Psoas muscle (tissue), 8 donors: ENCODE measurements at regions of chr13 and their contacts with region 1.

Region 1: GRCh38 chr13:109156181-109156935 is 526.9 kb downstream of the MYO16 start:
- DNase-seq: no peak
- ATAC-seq: peak; percentile 33 to 66 (median 48)
- H3K4me3 ChIP-seq: no peak overlapping the region
- H3K27ac ChIP-seq: no peak overlapping the region
- H3K4me1 ChIP-seq: peaks cover 10% of the 10 kb centered on the region
- H3K27me3 ChIP-seq: peaks cover 0 to 2% (median 0%) of the 10 kb centered on the region in 3 donors
- CTCF ChIP-seq: no peak

Region 2: DNA sequence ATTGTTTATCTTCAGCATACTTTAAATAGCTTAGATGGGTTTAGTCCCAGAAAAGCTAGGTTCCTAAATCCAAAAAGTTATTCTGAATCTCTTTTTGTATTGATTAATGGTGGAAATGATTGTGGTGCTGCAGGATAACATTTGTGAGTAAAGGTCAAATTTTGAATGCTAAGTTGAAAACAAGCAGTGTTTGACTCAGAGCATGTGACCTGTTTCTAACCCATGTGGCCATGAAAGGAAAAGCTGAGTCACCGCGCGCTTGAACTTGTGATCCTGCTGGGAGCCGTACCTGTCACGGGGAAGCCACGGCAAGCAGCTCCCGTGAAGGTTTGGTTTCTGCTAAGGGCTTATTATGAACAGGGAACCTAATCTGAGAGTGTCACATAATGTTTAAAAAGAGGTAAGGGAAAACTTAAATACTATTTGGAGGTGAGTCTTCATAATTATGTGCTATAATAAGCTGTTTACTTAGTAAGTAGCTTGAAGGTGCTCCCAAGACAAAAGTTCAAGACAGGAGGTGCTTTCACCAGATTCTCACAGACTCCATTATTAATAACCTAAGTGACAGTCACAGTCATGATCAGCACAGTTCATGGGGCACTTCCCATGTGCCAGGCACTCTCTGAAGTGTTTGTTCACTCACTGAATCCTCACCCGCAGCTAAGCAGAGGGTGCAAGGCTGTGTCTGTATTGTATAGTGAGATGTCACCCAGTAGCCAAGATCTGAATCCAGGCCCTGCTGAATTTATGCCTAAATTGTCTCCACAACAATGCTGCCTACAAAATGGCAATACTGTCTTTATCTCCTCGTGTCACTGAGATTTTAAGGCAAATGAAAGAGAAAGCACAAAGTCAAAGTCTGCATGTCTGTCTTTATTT is 240.5 kb before region 1 on chr13:
- intact Hi-C with region 1: no loop called
- DNase-seq: peak; percentile 75 to 80
- ATAC-seq: peak in 3 of 4 donors; percentile 45 to 74 (median 49)
- H3K4me3 ChIP-seq: peak overlapping the region; percentile 13
- H3K27ac ChIP-seq: peak overlapping the region; percentile 39
- H3K4me1 ChIP-seq: no peaks in the 10 kb centered on the region
- H3K27me3 ChIP-seq: no peaks in the 10 kb centered on the region
- CTCF ChIP-seq: no peak

Region 3: GRCh38 chr13:109026266-109026665 is 130.1 kb before region 1 on chr13:
- intact Hi-C with region 1: no loop called
- DNase-seq: no peak
- ATAC-seq: no peak
- H3K4me3 ChIP-seq: no peak overlapping the region
- H3K27ac ChIP-seq: no peak overlapping the region
- H3K4me1 ChIP-seq: no peaks in the 10 kb centered on the region
- H3K27me3 ChIP-seq: no peaks in the 10 kb centered on the region
- CTCF ChIP-seq: no peak

Region 4: DNA sequence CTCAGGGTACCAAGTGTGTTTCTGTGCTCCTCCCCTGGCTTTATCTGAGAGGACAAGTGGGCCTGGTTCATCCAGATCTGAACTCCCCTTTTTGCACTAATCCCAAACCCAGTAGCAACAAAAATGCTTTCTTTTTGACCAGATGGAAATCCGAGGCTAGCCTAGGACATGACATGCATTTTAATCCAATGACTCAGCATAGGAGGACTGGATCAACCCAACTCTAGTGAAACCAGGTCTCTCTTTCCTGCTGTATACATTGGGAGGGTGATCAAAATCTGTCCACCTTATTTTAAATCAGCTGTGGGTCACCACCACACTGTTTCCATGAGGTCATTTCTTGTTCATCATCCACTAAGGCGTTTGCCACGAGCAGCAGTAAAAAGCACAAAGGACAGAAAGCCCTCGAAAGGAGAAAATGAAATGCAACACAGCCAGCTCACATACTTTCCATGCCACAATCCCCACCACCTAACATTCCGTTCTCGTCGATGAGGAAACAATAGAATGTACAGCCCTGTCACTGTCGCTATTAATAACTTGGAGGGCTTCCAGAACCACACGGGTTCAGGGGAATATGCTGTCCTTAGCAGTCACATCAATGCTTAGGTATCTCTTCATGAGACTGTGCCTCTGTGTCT is 87.1 kb after region 1 on chr13:
- intact Hi-C with region 1: loop called in 1 of 2 experiments (anchors 5 kb)
- DNase-seq: no peak
- ATAC-seq: peak; percentile 85 to 97 (median 94)
- H3K4me3 ChIP-seq: no peak overlapping the region
- H3K27ac ChIP-seq: peak overlapping the region; percentile 61
- H3K4me1 ChIP-seq: peaks cover 3% of the 10 kb centered on the region
- H3K27me3 ChIP-seq: no peaks in the 10 kb centered on the region
- CTCF ChIP-seq: no peak

Region 5: GRCh38 chr13:109336730-109337129 is 180.4 kb after region 1 on chr13:
- intact Hi-C with region 1: no loop called
- DNase-seq: no peak
- ATAC-seq: no peak
- H3K4me3 ChIP-seq: no peak overlapping the region
- H3K27ac ChIP-seq: no peak overlapping the region
- H3K4me1 ChIP-seq: no peaks in the 10 kb centered on the region
- H3K27me3 ChIP-seq: no peaks in the 10 kb centered on the region
- CTCF ChIP-seq: no peak